Activated CD4-positive, alpha-beta T cell treated with anti-CD3 and anti-CD28 coated beads for 36 hours (primary cell): ENCODE measurements at regions of chr15 and their contacts with region 1.

Region 1: GRCh38 chr15:81023483-81024264 is 23.0 kb downstream of the TLNRD1 start:
- DNase-seq: peak; percentile 45
- ATAC-seq: peak; percentile 85
- H3K4me3 Mint-ChIP-seq: peak overlapping the region; percentile 32
- H3K27ac Mint-ChIP-seq: peak overlapping the region; percentile 87
- H3K4me1 Mint-ChIP-seq: peaks cover 36% of the 10 kb centered on the region
- H3K27me3 Mint-ChIP-seq: peaks cover 2% of the 10 kb centered on the region

Region 2: DNA sequence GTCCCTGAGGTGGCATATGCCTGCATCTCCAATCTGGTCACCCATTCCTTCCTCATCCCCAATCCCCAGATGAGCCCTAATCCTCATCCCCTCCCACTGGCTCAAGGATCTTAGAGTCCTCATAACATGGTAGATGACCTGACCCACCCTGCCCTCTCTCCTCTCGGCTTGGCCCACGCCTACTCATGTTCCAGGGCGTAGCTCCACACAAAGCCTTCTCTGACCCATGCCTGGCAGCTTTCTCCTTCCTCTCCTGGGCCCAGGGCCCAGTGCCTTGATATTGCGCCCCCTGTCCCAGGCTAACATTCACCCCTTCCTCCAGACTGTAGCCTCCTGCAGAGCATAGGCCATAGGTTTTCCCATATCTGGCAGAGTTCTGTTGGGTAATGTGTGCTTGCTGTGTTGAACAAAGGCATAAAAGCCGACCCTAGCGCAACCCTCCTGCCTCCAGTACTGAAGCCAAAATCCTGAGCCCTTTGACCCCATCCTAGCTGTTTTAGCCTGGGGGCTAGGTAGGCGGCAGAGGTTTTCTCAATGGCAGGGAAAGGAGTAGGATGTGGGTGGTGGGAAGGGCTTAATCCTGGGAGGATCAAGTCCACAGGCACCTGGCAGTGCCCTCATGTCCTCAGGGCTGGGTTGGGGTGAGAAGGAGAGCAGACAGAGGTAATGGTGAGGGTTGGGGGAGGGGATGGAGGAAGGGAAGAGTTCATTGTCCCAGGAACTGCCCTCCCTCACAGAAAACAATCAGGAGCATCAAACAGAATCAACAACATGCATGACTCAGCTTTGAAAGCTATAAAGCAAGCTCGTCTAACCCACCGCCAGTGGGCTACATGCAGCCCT is 69.5 kb before region 1 on chr15:
- CTCF ChIA-PET with region 1: no interaction called
- POLR2A ChIA-PET with region 1: no interaction called
- intact Hi-C with region 1: loop called in 1 of 2 experiments (anchors 1 kb)
- DNase-seq: no peak
- ATAC-seq: no peak
- H3K4me3 Mint-ChIP-seq: no peak overlapping the region
- H3K27ac Mint-ChIP-seq: no peak overlapping the region
- H3K4me1 Mint-ChIP-seq: peaks cover 24% of the 10 kb centered on the region
- H3K27me3 Mint-ChIP-seq: no peaks in the 10 kb centered on the region

Region 3: DNA sequence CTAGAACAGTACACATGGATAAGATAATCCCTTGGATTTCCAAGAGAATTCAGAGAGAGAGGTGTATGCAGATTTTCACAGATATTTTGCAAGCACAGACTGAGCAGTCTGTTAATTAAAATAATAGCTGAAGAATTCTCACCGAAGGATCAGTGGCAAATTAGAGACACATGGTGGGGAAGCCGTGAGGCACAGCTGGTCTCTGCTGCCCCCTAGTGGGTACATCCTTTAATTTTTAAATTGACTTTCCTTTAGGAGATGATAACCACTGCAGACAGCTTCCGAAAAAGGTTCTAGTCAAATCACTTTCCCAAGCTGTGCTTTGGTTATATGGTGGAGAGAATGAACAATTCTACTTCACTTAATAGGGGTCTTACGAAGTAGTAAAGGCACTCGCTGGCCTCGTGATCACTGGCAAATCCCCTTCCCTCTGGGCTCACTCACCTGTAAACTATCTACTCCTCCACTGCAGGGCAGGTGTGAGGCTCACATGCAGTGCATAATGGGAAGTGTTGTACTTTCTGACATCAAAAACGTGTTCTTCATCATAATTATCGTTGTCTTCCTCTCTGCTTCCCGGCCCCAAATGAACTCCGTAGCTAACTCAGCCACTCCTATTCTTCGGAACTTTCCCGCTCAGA is 53.5 kb before region 1 on chr15:
- CTCF ChIA-PET with region 1: no interaction called
- POLR2A ChIA-PET with region 1: no interaction called
- intact Hi-C with region 1: no loop called
- DNase-seq: peak; percentile 76
- ATAC-seq: peak; percentile 74
- H3K4me3 Mint-ChIP-seq: no peak overlapping the region
- H3K27ac Mint-ChIP-seq: no peak overlapping the region
- H3K4me1 Mint-ChIP-seq: peaks cover 4% of the 10 kb centered on the region
- H3K27me3 Mint-ChIP-seq: no peaks in the 10 kb centered on the region

Region 4: GRCh38 chr15:81336568-81336967 is 312.9 kb after region 1 on chr15:
- CTCF ChIA-PET with region 1: no interaction called
- POLR2A ChIA-PET with region 1: no interaction called
- intact Hi-C with region 1: no loop called
- DNase-seq: peak; percentile 52
- ATAC-seq: peak; percentile 51
- H3K4me3 Mint-ChIP-seq: no peak overlapping the region
- H3K27ac Mint-ChIP-seq: no peak overlapping the region
- H3K4me1 Mint-ChIP-seq: peaks cover 7% of the 10 kb centered on the region
- H3K27me3 Mint-ChIP-seq: no peaks in the 10 kb centered on the region